Dorsolateral prefrontal cortex (tissue), 120 donors: ENCODE measurements at regions of chr2 and their contacts with region 1.

Region 1: GRCh38 chr2:100818606-100819369 is 1.2 kb upstream of the NPAS2 start:
- DNase-seq: peak in 5 of 10 donors; percentile 25 to 49 (median 46)
- H3K4me3 ChIP-seq: peak overlapping the region; percentile 33 to 83 (median 70)
- H3K27ac ChIP-seq: peak overlapping the region in 56 of 59 donors; percentile 18 to 94 (median 81)
- H3K27me3 ChIP-seq: peaks cover 0 to 23% (median 0%) of the 10 kb centered on the region in 45 donors
- CTCF ChIP-seq: peak in 20 of 56 donors; percentile 11 to 40 (median 28)

Region 2: DNA sequence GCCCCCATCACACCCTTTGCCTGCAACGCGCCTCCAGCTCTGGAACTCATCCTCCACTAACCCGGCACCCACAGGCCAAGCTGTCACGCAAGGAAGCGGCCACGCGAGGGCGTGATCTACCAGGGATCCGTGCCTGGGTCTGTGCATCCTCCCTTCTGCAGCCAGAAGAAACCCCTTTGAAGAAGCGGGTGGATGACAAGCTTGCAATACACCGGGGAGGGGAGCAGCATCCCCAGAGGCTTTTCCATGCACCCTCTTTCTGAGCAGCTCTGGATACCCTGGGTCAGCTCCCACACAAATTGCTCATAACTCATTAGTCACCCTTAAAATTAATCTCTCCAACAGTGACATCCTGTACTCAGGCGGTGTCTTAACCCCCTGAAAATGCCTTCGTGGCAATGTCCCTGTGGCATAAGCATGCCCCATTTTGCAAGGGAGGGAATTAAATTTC is 208.4 kb before region 1 on chr2:
- intact Hi-C with region 1: loop called (anchors 10 kb)
- DNase-seq: peak; percentile 54 to 92 (median 88)
- H3K4me3 ChIP-seq: no peak overlapping the region
- H3K27ac ChIP-seq: peak overlapping the region in 1 of 59 donors; percentile 45
- H3K27me3 ChIP-seq: no peaks in the 10 kb centered on the region
- CTCF ChIP-seq: peak; percentile 24 to 87 (median 74)

Region 3: DNA sequence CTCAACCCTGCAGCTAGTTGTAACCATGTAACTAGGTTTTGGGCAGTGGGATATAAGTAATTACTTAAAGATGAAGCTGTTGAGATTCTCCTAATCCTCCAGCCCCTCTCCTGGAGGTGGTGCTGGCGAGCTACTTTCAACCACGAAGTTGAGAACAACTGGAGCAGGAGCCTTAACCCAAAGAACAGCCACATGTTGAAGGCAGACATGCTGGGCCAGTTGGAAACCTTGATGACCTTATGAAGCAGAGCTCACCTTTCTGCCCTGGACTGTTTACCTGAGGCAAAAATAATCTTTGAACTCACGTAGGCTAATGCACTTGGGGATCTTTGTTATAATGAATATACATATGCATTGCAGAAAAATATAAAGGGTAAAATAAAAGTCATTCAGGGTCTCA is 88.4 kb before region 1 on chr2:
- intact Hi-C with region 1: no loop called
- DNase-seq: no peak
- H3K4me3 ChIP-seq: no peak overlapping the region
- H3K27ac ChIP-seq: no peak overlapping the region
- H3K27me3 ChIP-seq: no peaks in the 10 kb centered on the region
- CTCF ChIP-seq: peak in 42 of 56 donors; percentile 7 to 54 (median 28)

Region 4: DNA sequence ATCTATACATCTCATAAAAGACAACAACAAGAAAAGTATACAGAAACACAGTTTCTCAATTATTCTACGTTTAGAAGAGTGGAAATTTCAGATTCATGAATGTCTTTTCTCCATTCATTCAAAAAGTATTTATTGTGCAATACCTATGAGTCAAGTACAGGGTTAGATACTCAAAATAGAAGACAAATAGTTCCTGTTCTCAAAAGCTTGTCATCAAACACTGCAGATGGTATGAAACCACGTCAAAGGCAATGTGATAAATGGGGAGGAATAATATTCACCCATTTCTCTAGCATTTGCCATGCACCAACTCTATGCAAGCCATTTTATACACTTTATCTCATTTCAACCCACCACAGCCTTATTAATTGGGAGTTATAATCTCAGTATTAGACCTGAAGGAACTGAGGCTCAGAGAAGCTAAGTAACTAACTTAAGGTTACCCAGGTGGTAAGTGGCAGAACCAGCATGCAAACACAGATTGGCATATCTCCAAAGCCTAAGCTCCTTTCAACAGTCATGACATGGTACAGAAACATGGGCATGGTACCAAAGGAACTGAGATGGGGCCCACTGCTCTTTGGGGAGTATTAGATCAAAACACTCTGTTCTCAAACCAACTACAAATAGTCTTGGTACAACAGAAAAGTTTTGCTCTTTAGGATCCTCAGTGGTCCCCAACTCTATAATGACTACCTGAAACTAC is 66.0 kb before region 1 on chr2:
- intact Hi-C with region 1: no loop called
- DNase-seq: no peak
- H3K4me3 ChIP-seq: no peak overlapping the region
- H3K27ac ChIP-seq: no peak overlapping the region
- H3K27me3 ChIP-seq: peaks cover 0 to 7% (median 0%) of the 10 kb centered on the region in 45 donors
- CTCF ChIP-seq: no peak

Region 5: GRCh38 chr2:100902833-100903405 is 84.1 kb after region 1 on chr2:
- intact Hi-C with region 1: no loop called
- DNase-seq: no peak
- H3K4me3 ChIP-seq: no peak overlapping the region
- H3K27ac ChIP-seq: peak overlapping the region in 1 of 59 donors; percentile 1
- H3K27me3 ChIP-seq: no peaks in the 10 kb centered on the region
- CTCF ChIP-seq: no peak

Region 6: DNA sequence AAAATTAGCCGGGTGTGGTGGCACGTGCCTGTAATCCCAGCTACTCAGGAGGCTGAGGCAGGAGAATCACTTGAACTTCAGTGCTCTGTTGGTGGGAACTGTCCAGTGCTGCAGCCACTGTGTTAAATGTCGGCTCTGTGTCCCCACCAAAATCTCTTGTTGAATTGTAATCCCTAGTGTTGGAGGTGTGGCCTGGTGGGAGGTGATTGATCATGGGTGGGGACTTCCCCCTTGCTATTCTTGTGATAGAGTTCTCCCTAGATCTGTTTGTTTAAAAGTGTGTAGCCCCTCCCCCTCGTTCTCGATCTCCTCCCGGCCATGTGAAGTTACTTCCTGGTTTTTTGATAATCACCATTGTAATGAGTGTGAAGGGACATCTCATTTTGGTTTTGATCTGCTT is 173.5 kb after region 1 on chr2:
- intact Hi-C with region 1: loop called in 1 of 2 experiments (anchors 10 kb)
- DNase-seq: peak in 1 of 10 donors; percentile 1
- H3K4me3 ChIP-seq: no peak overlapping the region
- H3K27ac ChIP-seq: no peak overlapping the region
- H3K27me3 ChIP-seq: no peaks in the 10 kb centered on the region
- CTCF ChIP-seq: no peak